Stomach (tissue), 19 donors: ENCODE measurements at regions of chr5 and their contacts with region 1.

Region 1: GRCh38 chr5:64615895-64616294 is 74.4 kb upstream of the SHISAL2B start:
- DNase-seq: no peak
- H3K4me3 ChIP-seq: no peak overlapping the region
- H3K27ac ChIP-seq: no peak overlapping the region
- H3K4me1 ChIP-seq: peaks cover 0 to 13% (median 7%) of the 10 kb centered on the region in 4 donors
- H3K27me3 ChIP-seq: no peaks in the 10 kb centered on the region
- CTCF ChIP-seq: no peak
- EP300 ChIP-seq: no peak
- POLR2A ChIP-seq: no peak

Region 2: DNA sequence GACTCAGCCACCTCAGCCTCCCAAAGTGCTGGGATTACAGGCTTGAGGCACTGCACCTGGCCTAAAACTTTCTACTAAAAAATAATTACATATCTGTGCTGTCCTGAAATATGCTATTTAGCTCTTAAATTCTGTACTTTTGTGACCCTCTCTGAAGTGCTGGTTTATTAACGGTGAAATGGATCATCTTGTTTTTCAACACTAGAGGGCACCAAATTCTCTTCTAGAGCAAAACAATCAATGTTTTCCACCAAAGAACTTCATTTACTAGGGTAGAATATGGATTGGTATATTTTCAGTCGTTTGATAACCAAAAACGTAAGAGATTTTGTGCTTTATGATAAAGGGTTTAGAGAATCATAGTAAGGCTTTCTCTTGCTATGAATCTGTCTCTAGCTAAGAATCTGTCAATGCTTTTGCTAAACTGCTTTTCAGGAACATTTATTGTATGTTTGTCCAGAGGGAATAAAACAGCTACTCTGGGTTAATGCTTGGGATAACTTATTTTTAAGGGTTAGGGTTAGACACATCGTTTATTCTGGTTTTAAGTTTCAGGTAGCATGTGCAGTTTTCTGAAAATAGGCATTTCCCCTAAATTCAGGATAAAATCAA is 386.6 kb before region 1 on chr5:
- intact Hi-C with region 1: loop called (anchors 5 kb)
- DNase-seq: peak in 1 of 2 donors; percentile 56
- H3K4me3 ChIP-seq: no peak overlapping the region
- H3K27ac ChIP-seq: no peak overlapping the region
- H3K4me1 ChIP-seq: no peaks in the 10 kb centered on the region
- H3K27me3 ChIP-seq: no peaks in the 10 kb centered on the region
- CTCF ChIP-seq: peak in 3 of 7 experiments; percentile 50 to 59 (median 57)
- EP300 ChIP-seq: no peak
- POLR2A ChIP-seq: no peak